ENCODE measurements at regions of chr1 and their contacts with region 1.

Region 1: GRCh38 chr1:155729031-155729898 is 40.4 kb downstream of the DAP3 start:
- DNase-seq: peak; percentile 55
- H3K4me3 ChIP-seq: no peak overlapping the region
- H3K27ac ChIP-seq: peak overlapping the region; percentile 31 to 38; a peak in 3 of 4 replicates
- H3K4me1 ChIP-seq: no peaks in the 10 kb centered on the region
- H3K27me3 ChIP-seq: no peaks in the 10 kb centered on the region
- CTCF ChIP-seq: peak; percentile 73
- EP300 ChIP-seq: no peak
- RAD21 ChIP-seq: peak; percentile 79

Region 2: DNA sequence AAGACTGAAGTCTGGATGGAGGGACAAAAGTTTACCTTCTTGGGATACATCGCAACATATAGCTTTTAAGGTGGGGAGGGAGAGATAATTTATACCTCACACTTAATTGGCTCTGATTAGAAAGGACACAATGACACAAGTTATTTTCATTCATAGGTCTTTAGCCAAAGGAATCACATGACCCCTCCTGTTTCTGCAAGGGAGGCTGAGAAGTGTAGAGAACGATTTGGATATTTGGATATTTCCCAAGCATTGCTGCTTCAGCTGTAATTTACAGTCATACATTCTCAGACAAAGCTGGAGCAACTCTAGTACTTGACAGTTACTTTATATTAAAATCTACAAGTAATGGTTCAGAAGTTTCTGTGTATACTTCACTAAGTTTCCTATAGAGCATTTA is 16.2 kb before region 1 on chr1:
- CTCF ChIA-PET with region 1: interaction called, 18 read pairs
- POLR2A ChIA-PET with region 1: no interaction called
- DNase-seq: no peak
- H3K4me3 ChIP-seq: no peak overlapping the region
- H3K27ac ChIP-seq: no peak overlapping the region
- H3K4me1 ChIP-seq: no peaks in the 10 kb centered on the region
- H3K27me3 ChIP-seq: no peaks in the 10 kb centered on the region
- CTCF ChIP-seq: no peak
- EP300 ChIP-seq: no peak
- RAD21 ChIP-seq: no peak

Region 3: DNA sequence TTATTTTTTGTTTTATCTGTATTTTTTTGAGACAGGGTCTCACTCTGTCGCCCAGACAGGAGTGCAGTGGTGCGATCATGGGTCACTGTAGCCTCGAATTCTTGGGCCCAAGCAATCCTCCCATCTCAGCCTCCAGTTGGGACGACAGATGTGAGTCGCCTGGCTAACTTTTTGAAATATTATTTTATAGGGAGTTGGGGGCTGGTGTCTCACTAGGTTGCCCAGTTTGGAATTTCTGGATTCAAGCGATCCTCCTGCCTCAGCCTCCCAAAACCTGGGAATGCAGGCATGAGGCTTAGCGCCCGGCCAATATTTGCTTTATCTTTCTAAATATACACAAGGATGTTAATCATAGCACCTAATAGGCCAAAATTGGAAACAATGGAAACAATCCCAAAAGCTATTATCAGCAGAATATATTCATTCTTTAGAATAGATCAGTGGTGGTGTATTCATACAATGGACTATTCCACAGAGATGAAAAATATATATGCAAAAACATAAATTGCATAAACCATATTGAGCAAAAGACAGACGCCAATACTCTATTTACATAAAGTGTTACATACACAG is 15.5 kb after region 1 on chr1:
- CTCF ChIA-PET with region 1: interaction called, 12 read pairs
- POLR2A ChIA-PET with region 1: no interaction called
- DNase-seq: no peak
- H3K4me3 ChIP-seq: peak overlapping the region; percentile 59 to 75
- H3K27ac ChIP-seq: peak overlapping the region; percentile 65 to 69
- H3K4me1 ChIP-seq: no peaks in the 10 kb centered on the region
- H3K27me3 ChIP-seq: no peaks in the 10 kb centered on the region
- CTCF ChIP-seq: no peak
- EP300 ChIP-seq: no peak
- RAD21 ChIP-seq: no peak

Region 4: DNA sequence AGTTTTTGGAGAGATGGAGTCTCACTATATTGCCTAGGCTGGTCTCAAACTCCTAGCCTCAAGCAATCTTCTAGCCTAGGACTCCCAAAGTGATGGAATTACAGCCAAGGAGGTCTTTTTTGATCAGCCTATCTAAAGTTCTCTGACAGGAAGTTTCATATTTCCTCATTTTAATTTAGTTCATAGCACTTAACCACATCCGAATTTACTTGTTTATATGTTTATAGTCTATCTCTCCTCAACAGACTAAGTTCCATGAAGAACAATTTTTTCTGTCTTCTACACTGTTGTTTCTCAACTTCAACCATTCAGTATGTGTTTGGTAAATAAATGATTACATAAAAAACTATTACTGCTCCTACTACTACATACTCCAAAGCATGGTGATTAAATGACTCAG is 79.8 kb after region 1 on chr1:
- CTCF ChIA-PET with region 1: no interaction called
- POLR2A ChIA-PET with region 1: no interaction called
- DNase-seq: no peak
- H3K4me3 ChIP-seq: no peak overlapping the region
- H3K27ac ChIP-seq: no peak overlapping the region
- H3K4me1 ChIP-seq: no peaks in the 10 kb centered on the region
- H3K27me3 ChIP-seq: no peaks in the 10 kb centered on the region
- CTCF ChIP-seq: no peak
- EP300 ChIP-seq: no peak
- RAD21 ChIP-seq: no peak

Region 5: DNA sequence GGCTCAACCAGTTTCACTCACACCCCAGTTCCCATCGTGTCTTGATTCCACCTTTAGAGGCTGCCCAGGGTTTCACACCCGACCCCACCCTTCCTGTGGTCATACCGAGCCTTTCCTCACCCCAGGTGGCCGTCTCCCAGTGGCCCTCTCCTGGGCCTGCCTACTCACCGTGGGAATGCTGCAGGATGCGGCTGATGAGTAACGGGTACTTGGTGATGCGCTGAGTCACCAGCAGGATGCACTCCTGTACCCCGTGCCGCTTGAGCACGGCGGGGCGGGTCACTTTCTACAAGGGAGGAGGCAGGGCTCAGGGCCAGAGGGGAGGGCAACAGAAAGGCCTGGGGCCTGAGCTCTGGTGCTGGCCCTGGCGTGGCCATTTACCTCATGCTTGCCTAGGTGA is 232.7 kb after region 1 on chr1:
- CTCF ChIA-PET with region 1: no interaction called
- POLR2A ChIA-PET with region 1: no interaction called
- DNase-seq: no peak
- H3K4me3 ChIP-seq: no peak overlapping the region
- H3K27ac ChIP-seq: peak overlapping the region in 1 of 2 experiments; percentile 79; a peak in 2 of 4 replicates
- H3K4me1 ChIP-seq: peaks cover 3 to 17% of the 10 kb centered on the region in 2 experiments; a peak in 2 of 4 replicates
- H3K27me3 ChIP-seq: no peaks in the 10 kb centered on the region
- CTCF ChIP-seq: peak; percentile 55
- EP300 ChIP-seq: no peak; a peak in 1 of 4 replicates
- RAD21 ChIP-seq: peak; percentile 36; the same call in 1 of the 2 replicates

Measured in SK-N-SH (cell line).